Heart left ventricle (tissue), 16 donors: ENCODE measurements at regions of chr9 and their contacts with region 1.

Region 1: GRCh38 chr9:92764988-92765936 is 629 bp upstream of the BICD2 start:
- DNase-seq: peak; percentile 99
- ATAC-seq: peak; percentile 95 to 98 (median 98)
- H3K4me3 ChIP-seq: peak overlapping the region; percentile 42 to 100 (median 98)
- H3K27ac ChIP-seq: peak overlapping the region; percentile 97 to 100 (median 100)
- H3K4me1 ChIP-seq: peaks cover 13 to 68% (median 50%) of the 10 kb centered on the region in 12 donors
- H3K27me3 ChIP-seq: no peaks in the 10 kb centered on the region
- CTCF ChIP-seq: peak; percentile 90 to 100 (median 98)
- POLR2A ChIP-seq: peak; percentile 13 to 88

Region 2: GRCh38 chr9:92325269-92325990 is 439.8 kb before region 1 on chr9 and contains the starts of genes CENPP and NOL8:
- intact Hi-C with region 1: loop called in 1 of 10 experiments (anchors 10 kb)
- DNase-seq: peak; percentile 86 to 91 (median 87)
- ATAC-seq: peak; percentile 98 to 99 (median 98)
- H3K4me3 ChIP-seq: peak within 1 kb of the TSS; percentile 53 to 90 (median 80)
- H3K27ac ChIP-seq: peak within 1 kb of the TSS; percentile 86 to 99 (median 96)
- H3K4me1 ChIP-seq: peaks cover 0 to 31% (median 16%) of the 10 kb centered on the region in 12 donors
- H3K27me3 ChIP-seq: no peaks in the 10 kb centered on the region
- CTCF ChIP-seq: no peak
- POLR2A ChIP-seq: no peak
- total RNA-seq, gene CENPP: 1.2 to 5.8 (median 3.1) TPM
- total RNA-seq, gene NOL8: 8.1 to 25.6 (median 18.1) TPM

Region 3: GRCh38 chr9:92669890-92670708 is 95.2 kb before region 1 on chr9 and contains the start of gene IPPK:
- intact Hi-C with region 1: loop called in 6 of 10 experiments (anchors 1 to 10 kb)
- DNase-seq: peak; percentile 98 to 100 (median 99)
- ATAC-seq: peak; percentile 94 to 98 (median 96)
- H3K4me3 ChIP-seq: peak within 1 kb of the TSS; percentile 48 to 98 (median 88)
- H3K27ac ChIP-seq: peak within 1 kb of the TSS; percentile 80 to 98 (median 93)
- H3K4me1 ChIP-seq: peaks cover 0 to 48% (median 28%) of the 10 kb centered on the region in 12 donors
- H3K27me3 ChIP-seq: no peaks in the 10 kb centered on the region
- CTCF ChIP-seq: no peak
- POLR2A ChIP-seq: peak; percentile 19 to 64
- total RNA-seq, gene IPPK: 5.8 to 10.1 (median 8.6) TPM

Region 4: GRCh38 chr9:92716557-92716956 is 48.7 kb before region 1 on chr9:
- intact Hi-C with region 1: loop called in 4 of 10 experiments (anchors 2 to 5 kb)
- DNase-seq: peak; percentile 59 to 84 (median 65)
- ATAC-seq: peak; percentile 18 to 48 (median 36)
- H3K4me3 ChIP-seq: no peak overlapping the region
- H3K27ac ChIP-seq: peak overlapping the region in 9 of 12 donors; percentile 15 to 78 (median 60)
- H3K4me1 ChIP-seq: peaks cover 11 to 27% (median 20%) of the 10 kb centered on the region in 12 donors
- H3K27me3 ChIP-seq: no peaks in the 10 kb centered on the region
- CTCF ChIP-seq: peak; percentile 87 to 96 (median 91)
- POLR2A ChIP-seq: no peak

Region 5: GRCh38 chr9:92728831-92729734 is 36.2 kb before region 1 on chr9:
- intact Hi-C with region 1: loop called in 5 of 10 experiments (anchors 5 kb)
- DNase-seq: peak in 3 of 5 donors; percentile 19 to 60 (median 43)
- ATAC-seq: peak in 3 of 4 donors; percentile 51 to 75 (median 53)
- H3K4me3 ChIP-seq: no peak overlapping the region
- H3K27ac ChIP-seq: no peak overlapping the region
- H3K4me1 ChIP-seq: peaks cover 0 to 63% (median 20%) of the 10 kb centered on the region in 12 donors
- H3K27me3 ChIP-seq: no peaks in the 10 kb centered on the region
- CTCF ChIP-seq: peak; percentile 18 to 71 (median 42)
- POLR2A ChIP-seq: no peak

Region 6: DNA sequence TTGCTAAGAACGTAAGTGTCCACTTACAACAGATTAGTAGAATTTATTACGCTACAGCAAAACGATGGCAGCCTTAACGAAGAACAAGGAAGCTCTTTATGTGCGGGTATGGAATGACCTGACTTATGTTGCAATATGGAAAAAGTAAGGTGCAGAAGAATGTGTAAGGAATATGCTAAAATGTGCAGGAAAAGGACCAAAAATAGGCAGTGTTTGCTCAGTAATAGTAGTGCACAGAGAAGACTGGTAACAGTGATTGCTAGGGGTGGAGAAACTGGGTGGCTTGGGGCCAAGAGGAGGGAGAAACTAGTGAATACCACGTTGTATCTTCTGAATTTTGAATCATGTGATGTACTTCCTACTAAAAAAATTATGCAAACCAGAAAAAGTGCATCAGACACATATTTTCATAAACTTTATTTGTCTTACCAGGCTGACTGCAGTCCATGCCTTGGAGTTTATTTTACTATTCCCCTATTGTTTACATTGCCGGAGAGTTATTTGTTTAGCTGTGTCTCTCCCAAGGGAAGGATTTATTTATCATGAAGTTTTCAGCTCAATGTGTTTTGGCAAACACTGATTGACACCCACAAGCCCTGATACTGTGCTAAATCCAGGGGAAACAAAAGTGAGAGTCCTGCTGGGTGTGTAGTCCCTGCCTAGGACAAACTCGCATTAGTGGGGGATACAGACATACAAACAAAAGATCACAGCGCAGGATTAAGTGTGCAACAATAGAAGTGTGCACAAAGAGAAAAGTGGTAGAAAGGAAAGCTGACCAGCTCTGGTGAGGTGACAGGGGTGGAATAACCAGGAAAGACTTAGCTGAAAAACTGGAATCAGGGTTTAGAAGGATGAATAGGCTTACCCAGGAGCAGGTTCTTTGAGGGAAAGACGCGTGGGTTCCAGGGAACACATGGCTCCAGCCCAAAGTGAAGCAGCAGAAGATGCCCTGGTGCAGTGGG is 146.5 kb after region 1 on chr9:
- intact Hi-C with region 1: no loop called
- DNase-seq: no peak
- ATAC-seq: no peak
- H3K4me3 ChIP-seq: no peak overlapping the region
- H3K27ac ChIP-seq: no peak overlapping the region
- H3K4me1 ChIP-seq: no peaks in the 10 kb centered on the region
- H3K27me3 ChIP-seq: peaks cover 0 to 25% (median 6%) of the 10 kb centered on the region in 9 donors
- CTCF ChIP-seq: no peak
- POLR2A ChIP-seq: no peak